Activated T-helper 1 cell treated with anti-CD3 and anti-CD28 coated beads, Interleukin-12 subunit alpha, Interleukin-12 subunit beta, Interleukin-2, Interleukin-4 antibody, amounts not matched to agents 30 ng/mL and 10 ng/mL and 1 ng/mL, durations not matched to agents 14 hours and 24 hours and 36 hours (primary cell): ENCODE measurements at regions of chr1 and their contacts with region 1.

Region 1: GRCh38 chr1:179025125-179025974 is at the start of gene FAM20B:
- DNase-seq: peak; percentile 86
- H3K4me3 Mint-ChIP-seq: peak within 1 kb of the TSS; percentile 89
- H3K27ac Mint-ChIP-seq: peak within 1 kb of the TSS; percentile 82
- H3K4me1 Mint-ChIP-seq: peaks cover 43% of the 10 kb centered on the region
- H3K27me3 Mint-ChIP-seq: peaks cover 18% of the 10 kb centered on the region
- total RNA-seq, gene FAM20B: 36.6 and 39.2 TPM in 2 replicates

Region 2: DNA sequence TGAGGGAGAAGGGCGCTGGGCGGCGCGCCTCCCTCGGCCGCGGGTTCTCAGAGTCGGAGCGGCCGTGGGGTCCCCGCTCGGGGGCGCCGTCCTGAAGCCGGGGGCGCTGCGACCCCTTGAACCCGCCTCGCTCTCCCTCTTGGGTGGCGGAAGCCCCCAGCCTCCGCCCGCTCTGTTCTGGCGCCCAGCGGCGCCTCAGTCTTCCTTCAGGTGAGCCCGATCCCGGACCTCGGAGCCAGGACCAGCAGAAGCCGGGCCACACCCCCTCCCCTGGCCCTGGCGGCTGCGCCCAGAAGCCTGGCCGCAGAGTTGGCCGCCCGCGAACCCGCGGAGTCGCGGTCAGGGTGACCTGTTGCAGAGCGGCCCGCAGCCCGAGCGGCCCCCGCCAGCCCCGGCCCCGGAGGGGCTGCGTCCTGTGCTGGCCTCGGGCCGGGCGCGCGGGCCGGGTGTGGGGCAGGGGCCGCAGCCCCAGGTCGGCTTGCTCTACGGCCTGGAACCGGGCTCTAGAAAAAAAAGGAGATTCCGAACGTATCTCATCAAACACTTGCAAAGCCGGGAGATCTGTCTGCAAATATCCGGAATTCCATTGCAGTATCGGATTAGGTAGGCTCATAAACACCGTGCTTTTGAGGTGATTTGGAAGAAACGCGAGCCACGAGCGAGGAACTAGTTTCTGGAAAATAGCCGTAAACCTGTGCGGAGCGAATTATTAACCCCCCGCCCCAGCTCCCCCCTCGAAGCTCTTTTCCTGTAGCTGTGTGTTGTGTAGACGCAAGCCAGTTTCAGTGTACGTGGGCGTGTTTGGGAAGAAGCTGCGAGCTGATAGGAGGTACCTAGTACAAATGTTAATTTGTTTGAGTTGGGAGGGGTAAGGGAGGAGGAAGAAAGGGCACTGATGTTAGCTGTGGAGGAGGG is 299.5 kb before region 1 on chr1:
- intact Hi-C with region 1: loop called (anchors 5 kb)
- DNase-seq: peak; percentile 35
- H3K4me3 Mint-ChIP-seq: peak overlapping the region; percentile 84
- H3K27ac Mint-ChIP-seq: peak overlapping the region; percentile 43
- H3K4me1 Mint-ChIP-seq: peaks cover 10% of the 10 kb centered on the region
- H3K27me3 Mint-ChIP-seq: peaks cover 31% of the 10 kb centered on the region

Region 3: GRCh38 chr1:178986204-178986603 is 39.1 kb before region 1 on chr1:
- intact Hi-C with region 1: no loop called
- DNase-seq: no peak
- H3K4me3 Mint-ChIP-seq: no peak overlapping the region
- H3K27ac Mint-ChIP-seq: no peak overlapping the region
- H3K4me1 Mint-ChIP-seq: no peaks in the 10 kb centered on the region
- H3K27me3 Mint-ChIP-seq: peaks cover 2% of the 10 kb centered on the region

Region 4: GRCh38 chr1:181021811-181022434 is 1996.6 kb after region 1 on chr1:
- intact Hi-C with region 1: loop called (anchors 5 kb)
- DNase-seq: peak; percentile 37
- H3K4me3 Mint-ChIP-seq: peak overlapping the region; percentile 96
- H3K27ac Mint-ChIP-seq: peak overlapping the region; percentile 97
- H3K4me1 Mint-ChIP-seq: peaks cover 46% of the 10 kb centered on the region
- H3K27me3 Mint-ChIP-seq: peaks cover 15% of the 10 kb centered on the region